ENCODE measurements at regions of chr6 and their contacts with region 1.

Region 1: GRCh38 chr6:32868257-32868788 is 14.3 kb downstream of the PSMB9 start:
- DNase-seq: peak; percentile 61 to 94 (median 82)
- H3K4me3 ChIP-seq: no peak overlapping the region
- H3K27ac ChIP-seq: no peak overlapping the region
- H3K4me1 ChIP-seq: peaks cover 0 to 9% of the 10 kb centered on the region in 2 donors
- H3K27me3 ChIP-seq: peaks cover 8% of the 10 kb centered on the region
- CTCF ChIP-seq: peak; percentile 93 to 98 (median 97)
- POLR2A ChIP-seq: no peak

Region 2: GRCh38 chr6:32501016-32501415 is 367.3 kb before region 1 on chr6:
- intact Hi-C with region 1: no loop called
- DNase-seq: no peak
- H3K4me3 ChIP-seq: no peak overlapping the region
- H3K27ac ChIP-seq: peak overlapping the region in 1 of 5 donors; percentile 13
- H3K4me1 ChIP-seq: no peaks in the 10 kb centered on the region
- H3K27me3 ChIP-seq: no peaks in the 10 kb centered on the region
- CTCF ChIP-seq: no peak
- POLR2A ChIP-seq: no peak

Region 3: GRCh38 chr6:32642720-32643106 is 225.6 kb before region 1 on chr6:
- intact Hi-C with region 1: no loop called
- DNase-seq: no peak
- H3K4me3 ChIP-seq: no peak overlapping the region
- H3K27ac ChIP-seq: no peak overlapping the region
- H3K4me1 ChIP-seq: no peaks in the 10 kb centered on the region
- H3K27me3 ChIP-seq: no peaks in the 10 kb centered on the region
- CTCF ChIP-seq: no peak
- POLR2A ChIP-seq: no peak

Region 4: DNA sequence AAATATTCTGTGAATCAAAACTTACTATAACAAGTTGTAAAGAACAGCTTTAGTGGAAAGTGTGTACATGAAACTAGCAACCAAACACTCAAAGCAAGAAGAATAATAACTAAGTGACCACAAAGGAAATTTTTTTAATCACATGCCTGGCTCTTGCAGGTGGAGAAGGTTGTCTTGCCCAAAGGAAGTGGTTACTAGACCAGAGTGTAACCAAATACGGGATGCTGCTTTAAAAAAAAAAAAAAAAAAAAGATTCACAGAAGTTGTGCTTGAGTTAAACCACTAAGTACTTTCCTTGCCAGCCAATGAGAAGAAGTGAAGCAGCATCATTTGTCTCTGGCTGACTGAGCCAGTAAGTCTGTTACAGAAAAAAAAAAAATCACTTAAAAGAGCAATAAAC is 182.7 kb before region 1 on chr6:
- intact Hi-C with region 1: no loop called
- DNase-seq: peak in 1 of 7 donors; percentile 43
- H3K4me3 ChIP-seq: no peak overlapping the region
- H3K27ac ChIP-seq: no peak overlapping the region
- H3K4me1 ChIP-seq: no peaks in the 10 kb centered on the region
- H3K27me3 ChIP-seq: no peaks in the 10 kb centered on the region
- CTCF ChIP-seq: no peak
- POLR2A ChIP-seq: no peak

Region 5: DNA sequence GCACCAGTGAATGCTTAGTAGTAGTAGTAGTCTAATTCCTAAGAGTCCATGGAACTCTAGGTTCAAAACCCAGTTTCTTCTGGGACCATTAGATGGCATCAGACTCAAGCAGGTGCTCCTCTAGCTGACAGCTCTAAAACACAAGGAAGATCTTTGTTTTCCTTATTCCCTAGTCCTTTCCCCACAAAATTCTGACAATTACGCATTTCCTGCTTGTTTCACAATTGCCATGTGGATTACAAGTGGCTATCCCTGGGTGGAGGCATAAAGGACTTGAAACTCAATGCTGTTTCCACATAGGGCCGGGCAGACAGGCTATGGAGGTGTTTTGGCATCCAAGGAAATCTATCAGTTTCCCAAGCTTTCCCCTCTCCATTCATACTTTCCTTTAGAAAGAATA is 42.4 kb before region 1 on chr6:
- intact Hi-C with region 1: loop called in 1 of 2 experiments (anchors 5 kb)
- DNase-seq: no peak
- H3K4me3 ChIP-seq: no peak overlapping the region
- H3K27ac ChIP-seq: no peak overlapping the region
- H3K4me1 ChIP-seq: no peaks in the 10 kb centered on the region
- H3K27me3 ChIP-seq: no peaks in the 10 kb centered on the region
- CTCF ChIP-seq: peak in 5 of 6 experiments; percentile 21 to 47 (median 45)
- POLR2A ChIP-seq: no peak

Region 6: DNA sequence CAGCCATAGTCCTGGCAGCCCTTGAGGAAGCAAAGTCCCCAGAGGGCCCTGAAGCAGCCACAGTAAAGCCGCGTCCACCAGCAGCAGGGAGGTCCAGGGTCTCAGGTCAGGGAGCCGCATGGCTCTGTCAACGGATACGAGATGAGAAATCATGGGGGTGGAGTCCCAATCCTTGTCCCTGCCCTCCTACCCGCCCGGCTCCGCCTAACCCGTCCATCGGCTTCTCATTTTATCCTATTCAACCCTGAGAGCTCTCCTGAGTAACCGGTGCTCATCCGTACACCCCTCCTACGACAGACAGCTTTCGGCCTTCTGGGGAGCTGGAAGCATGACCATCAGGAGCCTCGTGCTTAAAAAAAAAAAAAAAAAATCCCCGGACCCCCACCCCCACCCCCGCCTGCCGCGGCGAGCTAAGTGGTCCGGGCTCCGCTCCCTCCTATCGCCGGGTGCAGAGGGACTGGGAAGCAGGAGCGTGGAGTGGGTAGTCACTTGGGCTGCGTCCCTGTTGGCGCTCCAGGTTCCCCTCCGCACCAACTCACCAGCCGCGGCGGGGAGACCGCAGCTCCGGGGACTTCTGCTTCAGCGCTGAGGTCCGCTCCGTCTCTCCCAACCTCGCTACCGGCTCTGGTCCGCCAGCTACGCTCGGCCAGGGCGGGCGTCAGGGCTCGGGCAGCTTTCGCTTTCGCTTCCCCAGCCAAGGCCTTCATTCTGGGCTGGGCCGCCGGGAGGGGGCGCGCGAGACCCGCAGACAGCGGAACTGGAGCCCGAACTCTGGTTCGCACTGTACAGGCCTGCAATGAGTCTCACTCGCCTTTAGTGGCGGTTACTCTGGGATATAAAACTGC is 30.0 kb before region 1 on chr6 and contains the start of gene TAP2:
- intact Hi-C with region 1: loop called (anchors 5 kb)
- DNase-seq: peak; percentile 95 to 98 (median 97)
- H3K4me3 ChIP-seq: peak within 1 kb of the TSS in 3 of 4 donors; percentile 50 to 97 (median 90)
- H3K27ac ChIP-seq: peak within 1 kb of the TSS; percentile 79 to 97 (median 92)
- H3K4me1 ChIP-seq: peaks cover 17 to 29% of the 10 kb centered on the region in 2 donors
- H3K27me3 ChIP-seq: no peaks in the 10 kb centered on the region
- CTCF ChIP-seq: peak; percentile 81 to 99 (median 98)
- POLR2A ChIP-seq: peak in 1 of 2 donors; percentile 69
- total RNA-seq, gene TAP2: 4.8 to 48.0 (median 19.4) TPM